ENCODE measurements at regions of chr2 and their contacts with region 1.

Region 1: DNA sequence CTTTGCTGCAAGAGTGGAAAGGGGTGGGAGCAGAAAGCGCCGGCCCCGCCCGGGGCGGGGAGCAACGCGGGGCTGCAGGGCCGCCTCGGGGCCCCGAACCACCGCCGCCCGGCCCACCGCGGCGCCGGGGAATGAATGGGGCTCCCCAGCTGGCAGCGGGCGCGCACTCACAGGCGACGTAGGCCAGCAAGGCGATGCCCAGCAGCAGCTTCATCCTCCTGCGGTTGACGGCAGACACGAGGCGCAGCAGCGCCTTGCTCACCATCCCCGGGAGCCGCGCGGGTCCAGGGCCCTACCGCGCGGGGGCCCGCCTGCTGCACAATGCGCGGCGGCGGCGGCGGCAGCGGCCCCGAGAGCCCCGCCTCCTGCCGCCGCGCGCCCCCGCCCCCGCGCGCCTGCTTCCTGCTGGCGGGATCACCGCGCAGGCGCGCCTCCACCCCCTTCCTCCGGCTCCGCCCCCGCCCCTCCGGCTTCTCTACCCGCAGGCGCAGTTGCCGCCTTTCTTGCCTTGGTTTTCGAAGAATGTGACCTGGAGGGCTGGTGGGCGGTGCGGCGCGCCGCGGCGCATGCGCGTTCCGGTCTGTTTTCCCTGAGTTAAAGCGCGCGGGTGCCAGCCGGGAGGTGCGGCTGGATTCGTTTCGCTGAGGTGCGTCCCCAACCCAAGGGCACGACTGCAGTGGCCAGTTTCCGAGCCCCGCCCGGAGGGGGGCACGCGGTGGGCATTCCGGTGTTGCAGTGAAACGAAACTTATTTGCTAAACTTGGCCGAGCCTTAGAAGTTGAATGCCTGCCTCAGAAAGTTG is at the start of gene UXS1:
- DNase-seq: peak; percentile 97 to 98 (median 97)
- ATAC-seq: peak; percentile 86
- H3K4me3 ChIP-seq: peak within 1 kb of the TSS; percentile 98
- H3K4me3 Mint-ChIP-seq: peak within 1 kb of the TSS; percentile 84 to 99 (median 94)
- H3K27ac ChIP-seq: peak within 1 kb of the TSS; percentile 85
- H3K27ac Mint-ChIP-seq: peak within 1 kb of the TSS; percentile 71 to 96 (median 94)
- H3K4me1 ChIP-seq: peaks cover 17 to 43% of the 10 kb centered on the region in 2 donors
- H3K4me1 Mint-ChIP-seq: peaks cover 42 to 51% (median 48%) of the 10 kb centered on the region in 7 donors
- H3K27me3 ChIP-seq: no peaks in the 10 kb centered on the region
- H3K27me3 Mint-ChIP-seq: peaks cover 0 to 16% (median 0%) of the 10 kb centered on the region in 5 donors
- total RNA-seq, gene UXS1: 52.3 to 185 (median 93.3) TPM

Region 2: GRCh38 chr2:105337124-105338019 is 856.8 kb before region 1 on chr2 and contains the start of gene C2orf49:
- CTCF ChIA-PET with region 1: no interaction called
- POLR2A ChIA-PET with region 1: no interaction called
- intact Hi-C with region 1: loop called (anchors 1 to 5 kb)
- DNase-seq: peak; percentile 81 to 94 (median 92)
- ATAC-seq: peak; percentile 94
- H3K4me3 ChIP-seq: peak within 1 kb of the TSS; percentile 83
- H3K4me3 Mint-ChIP-seq: peak within 1 kb of the TSS; percentile 89 to 100 (median 98)
- H3K27ac ChIP-seq: peak within 1 kb of the TSS; percentile 99
- H3K27ac Mint-ChIP-seq: peak within 1 kb of the TSS; percentile 99 to 100 (median 100)
- H3K4me1 ChIP-seq: peaks cover 18 to 22% of the 10 kb centered on the region in 2 donors
- H3K4me1 Mint-ChIP-seq: peaks cover 20 to 44% (median 42%) of the 10 kb centered on the region in 7 donors
- H3K27me3 ChIP-seq: no peaks in the 10 kb centered on the region
- H3K27me3 Mint-ChIP-seq: no peaks in the 10 kb centered on the region
- total RNA-seq, gene C2orf49: 17.5 to 30.8 (median 23.4) TPM

Region 3: GRCh38 chr2:105744091-105744908 is 449.9 kb before region 1 on chr2:
- CTCF ChIA-PET with region 1: no interaction called
- POLR2A ChIA-PET with region 1: no interaction called
- intact Hi-C with region 1: loop called (anchors 1 to 2 kb)
- DNase-seq: peak; percentile 57 to 79 (median 69)
- ATAC-seq: peak; percentile 87
- H3K4me3 ChIP-seq: peak overlapping the region; percentile 24
- H3K4me3 Mint-ChIP-seq: peak overlapping the region; percentile 76 to 96 (median 90)
- H3K27ac ChIP-seq: peak overlapping the region; percentile 80
- H3K27ac Mint-ChIP-seq: peak overlapping the region; percentile 90 to 96 (median 95)
- H3K4me1 ChIP-seq: peaks cover 48 to 54% of the 10 kb centered on the region in 2 donors
- H3K4me1 Mint-ChIP-seq: peaks cover 49 to 82% (median 77%) of the 10 kb centered on the region in 7 donors
- H3K27me3 ChIP-seq: no peaks in the 10 kb centered on the region
- H3K27me3 Mint-ChIP-seq: no peaks in the 10 kb centered on the region

Region 4: DNA sequence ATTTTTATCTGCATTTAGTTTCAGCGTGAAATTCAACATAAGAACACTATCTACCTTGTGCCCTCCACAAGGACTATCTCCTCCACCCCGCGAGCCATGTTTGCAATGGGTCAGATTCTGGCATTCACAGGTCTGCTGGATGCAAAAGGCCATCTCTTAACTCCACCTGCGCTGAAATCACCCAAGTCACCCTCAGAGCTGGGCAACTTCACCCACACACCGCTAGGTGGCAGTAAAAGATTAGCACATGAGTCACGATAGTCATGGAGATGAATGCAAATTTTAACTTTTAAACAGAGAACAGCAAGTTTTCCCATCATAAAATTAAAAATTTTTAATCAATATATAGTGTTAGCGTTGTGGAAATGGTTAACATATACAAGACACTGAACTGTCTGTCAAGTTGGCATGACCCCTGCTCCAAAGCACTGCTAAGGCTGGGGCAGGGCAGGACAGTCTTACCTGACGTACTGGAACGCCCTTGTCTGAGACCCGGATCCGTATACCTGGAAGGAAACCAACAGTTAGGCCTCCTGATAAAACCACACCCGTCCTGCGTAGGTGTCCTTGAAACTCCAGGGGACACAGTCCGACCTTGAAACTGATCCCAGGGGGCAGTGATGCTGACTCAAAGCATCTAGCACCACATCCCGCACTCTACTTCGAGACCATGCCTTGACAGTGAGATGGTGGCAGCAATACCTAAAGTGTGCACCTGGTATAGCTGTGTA is 89.7 kb before region 1 on chr2:
- CTCF ChIA-PET with region 1: interaction called, 6 read pairs
- POLR2A ChIA-PET with region 1: no interaction called
- intact Hi-C with region 1: loop called (anchors 1 to 2 kb)
- DNase-seq: peak in 8 of 9 donors; percentile 55 to 78 (median 70)
- ATAC-seq: peak; percentile 84
- H3K4me3 ChIP-seq: no peak overlapping the region
- H3K4me3 Mint-ChIP-seq: no peak overlapping the region
- H3K27ac ChIP-seq: no peak overlapping the region
- H3K27ac Mint-ChIP-seq: peak overlapping the region in 7 of 9 donors; percentile 3 to 73 (median 21)
- H3K4me1 ChIP-seq: no peaks in the 10 kb centered on the region
- H3K4me1 Mint-ChIP-seq: peaks cover 0 to 20% (median 13%) of the 10 kb centered on the region in 7 donors
- H3K27me3 ChIP-seq: no peaks in the 10 kb centered on the region
- H3K27me3 Mint-ChIP-seq: no peaks in the 10 kb centered on the region

Region 5: GRCh38 chr2:106147159-106147558 is 47.0 kb before region 1 on chr2:
- CTCF ChIA-PET with region 1: no interaction called
- POLR2A ChIA-PET with region 1: no interaction called
- intact Hi-C with region 1: loop called in 1 of 2 experiments (anchors 10 kb)
- DNase-seq: no peak
- ATAC-seq: no peak
- H3K4me3 ChIP-seq: no peak overlapping the region
- H3K4me3 Mint-ChIP-seq: no peak overlapping the region
- H3K27ac ChIP-seq: no peak overlapping the region
- H3K27ac Mint-ChIP-seq: peak overlapping the region in 6 of 9 donors; percentile 8 to 74 (median 40)
- H3K4me1 ChIP-seq: peaks cover 3 to 6% of the 10 kb centered on the region in 2 donors
- H3K4me1 Mint-ChIP-seq: peaks cover 44 to 84% (median 69%) of the 10 kb centered on the region in 7 donors
- H3K27me3 ChIP-seq: no peaks in the 10 kb centered on the region
- H3K27me3 Mint-ChIP-seq: no peaks in the 10 kb centered on the region

Region 6: GRCh38 chr2:106183101-106183696 is 11.0 kb before region 1 on chr2:
- CTCF ChIA-PET with region 1: no interaction called
- POLR2A ChIA-PET with region 1: interaction called, 4 read pairs
- intact Hi-C with region 1: loop called in 1 of 2 experiments (anchors 1 kb)
- DNase-seq: no peak
- ATAC-seq: no peak
- H3K4me3 ChIP-seq: no peak overlapping the region
- H3K4me3 Mint-ChIP-seq: peak overlapping the region in 6 of 10 donors; percentile 42 to 76 (median 56)
- H3K27ac ChIP-seq: no peak overlapping the region
- H3K27ac Mint-ChIP-seq: peak overlapping the region in 7 of 9 donors; percentile 29 to 87 (median 46)
- H3K4me1 ChIP-seq: peaks cover 0 to 38% of the 10 kb centered on the region in 2 donors
- H3K4me1 Mint-ChIP-seq: peaks cover 36 to 96% (median 84%) of the 10 kb centered on the region in 7 donors
- H3K27me3 ChIP-seq: no peaks in the 10 kb centered on the region
- H3K27me3 Mint-ChIP-seq: no peaks in the 10 kb centered on the region

Measured in naive thymus-derived CD4-positive, alpha-beta T cell (primary cell).